ENCODE measurements at regions of chr13 and their contacts with region 1.

Region 1: DNA sequence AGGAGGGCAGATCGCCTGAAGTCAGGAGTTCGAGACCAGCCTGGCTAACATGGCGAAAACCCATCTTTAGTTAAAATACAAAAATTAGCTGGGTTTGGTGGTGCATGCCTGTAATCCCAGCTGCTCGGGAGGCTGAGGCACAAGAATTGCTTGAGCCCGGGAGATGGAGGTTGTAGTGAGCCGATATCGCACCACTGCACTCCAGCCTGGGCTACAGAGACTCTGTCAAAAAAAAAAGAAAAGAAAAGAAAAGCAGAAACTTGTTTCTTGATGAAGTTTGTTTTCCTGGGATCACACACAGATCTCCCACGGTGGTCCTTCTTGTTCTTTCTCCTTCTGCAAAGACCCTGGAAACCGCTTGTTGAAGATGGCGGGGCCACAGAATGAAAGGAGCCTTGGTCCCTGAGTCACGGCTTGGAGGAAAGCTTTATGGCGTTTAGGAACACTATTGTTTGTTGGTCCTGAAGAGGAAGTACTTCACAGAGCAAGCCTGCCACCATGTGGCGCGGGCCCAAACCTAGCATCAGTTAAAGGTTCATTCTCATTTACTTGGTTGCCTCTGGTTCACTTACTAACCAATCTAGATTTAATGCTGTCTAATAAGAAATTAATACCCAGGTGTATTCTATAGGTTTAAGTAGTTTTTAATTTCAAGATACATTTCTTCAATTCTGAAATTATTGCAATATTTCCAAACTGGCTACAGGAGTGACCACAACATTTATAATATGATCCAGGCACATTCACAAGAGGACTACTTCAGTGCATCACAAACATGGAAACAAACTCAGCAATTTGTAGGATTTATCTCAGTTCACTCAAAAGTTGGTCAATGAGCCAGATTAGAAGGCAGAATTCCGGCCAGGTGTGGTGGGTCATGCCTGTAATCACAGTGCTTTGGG is 21.3 kb upstream of the ARL11 start:
- DNase-seq: peak; percentile 91
- H3K4me3 ChIP-seq: peak overlapping the region; percentile 33
- H3K27ac ChIP-seq: no peak overlapping the region
- H3K4me1 ChIP-seq: no peaks in the 10 kb centered on the region
- H3K27me3 ChIP-seq: no peaks in the 10 kb centered on the region
- CTCF ChIP-seq: peak; percentile 86

Region 2: DNA sequence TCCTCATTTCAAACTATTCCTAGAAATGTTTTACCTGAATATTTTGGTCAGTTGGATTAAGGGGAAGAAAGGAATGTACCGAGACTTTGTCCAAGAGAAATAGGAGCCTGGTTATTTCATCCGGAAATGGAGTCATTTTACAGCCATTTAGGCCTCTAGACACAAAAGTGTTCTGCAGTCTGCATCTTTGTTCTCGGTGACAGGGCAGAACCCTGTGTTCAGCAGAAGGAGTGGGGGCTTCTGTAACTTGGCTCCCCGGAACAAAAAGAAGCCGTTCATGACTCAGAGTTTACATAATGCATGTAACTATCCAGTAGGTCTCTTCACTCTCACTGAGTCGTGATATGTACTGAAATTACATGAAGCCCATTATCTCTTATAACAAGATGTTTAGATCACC is 652.9 kb before region 1 on chr13:
- CTCF ChIA-PET with region 1: interaction called, 11 read pairs
- POLR2A ChIA-PET with region 1: no interaction called
- intact Hi-C with region 1: no loop called
- DNase-seq: no peak
- H3K4me3 ChIP-seq: no peak overlapping the region
- H3K27ac ChIP-seq: no peak overlapping the region
- H3K4me1 ChIP-seq: no peaks in the 10 kb centered on the region
- H3K27me3 ChIP-seq: no peaks in the 10 kb centered on the region
- CTCF ChIP-seq: no peak

Region 3: GRCh38 chr13:49238651-49239050 is 368.3 kb before region 1 on chr13:
- CTCF ChIA-PET with region 1: no interaction called
- POLR2A ChIA-PET with region 1: no interaction called
- intact Hi-C with region 1: loop called (anchors 5 kb)
- DNase-seq: no peak
- H3K4me3 ChIP-seq: no peak overlapping the region
- H3K27ac ChIP-seq: no peak overlapping the region
- H3K4me1 ChIP-seq: no peaks in the 10 kb centered on the region
- H3K27me3 ChIP-seq: peaks cover 3% of the 10 kb centered on the region
- CTCF ChIP-seq: no peak

Region 4: DNA sequence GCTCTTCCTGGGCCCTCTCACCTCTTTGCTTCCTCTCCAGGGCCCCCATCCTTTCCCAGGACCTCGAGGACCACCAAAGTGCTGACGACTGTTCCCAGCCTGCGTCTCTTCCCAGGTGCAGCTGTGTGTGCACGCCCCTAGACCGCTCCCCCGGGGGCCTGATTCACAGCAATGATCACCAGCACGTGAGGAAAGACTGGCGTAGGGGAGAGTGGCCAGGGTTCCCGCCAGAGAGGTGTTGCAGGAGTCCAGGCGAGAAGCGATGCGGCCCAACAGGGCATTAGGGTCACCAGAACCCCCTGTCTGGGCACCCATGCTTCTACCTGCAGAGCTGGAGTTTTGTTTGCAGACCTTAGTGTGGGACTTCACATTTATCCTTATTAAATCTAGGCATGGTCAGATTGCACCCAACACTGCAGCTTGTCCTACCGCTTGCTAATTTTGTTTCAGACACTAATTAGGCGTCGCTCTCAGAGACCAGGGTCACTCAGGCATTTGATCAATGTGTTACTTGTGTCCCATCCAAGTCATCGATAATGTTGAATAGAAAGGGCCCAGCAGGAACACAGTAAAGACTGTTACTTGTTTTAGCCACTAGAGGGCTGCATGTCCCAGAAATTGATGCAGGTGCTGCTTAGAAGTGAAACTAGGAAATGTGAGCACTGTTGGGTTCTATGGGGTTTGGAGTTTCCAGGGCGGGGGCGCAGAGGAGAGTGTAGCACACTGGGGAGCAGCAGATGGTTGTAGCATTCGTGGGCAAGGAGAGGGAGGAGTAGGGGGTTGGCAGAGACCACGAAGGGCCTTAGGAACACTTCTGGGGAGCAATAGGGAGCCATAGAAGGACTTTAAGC is 306.0 kb before region 1 on chr13:
- CTCF ChIA-PET with region 1: interaction called, 6 read pairs
- POLR2A ChIA-PET with region 1: no interaction called
- intact Hi-C with region 1: loop called (anchors 1 kb)
- DNase-seq: peak; percentile 77
- H3K4me3 ChIP-seq: no peak overlapping the region
- H3K27ac ChIP-seq: no peak overlapping the region
- H3K4me1 ChIP-seq: no peaks in the 10 kb centered on the region
- H3K27me3 ChIP-seq: no peaks in the 10 kb centered on the region
- CTCF ChIP-seq: peak; percentile 91

Region 5: GRCh38 chr13:49443704-49444523 is 163.1 kb before region 1 on chr13 and contains the starts of genes CAB39L and SETDB2:
- CTCF ChIA-PET with region 1: no interaction called
- POLR2A ChIA-PET with region 1: no interaction called
- intact Hi-C with region 1: loop called (anchors 10 kb)
- DNase-seq: peak; percentile 99
- H3K4me3 ChIP-seq: peak within 1 kb of the TSS; percentile 82
- H3K27ac ChIP-seq: peak within 1 kb of the TSS; percentile 75
- H3K4me1 ChIP-seq: peaks cover 5% of the 10 kb centered on the region
- H3K27me3 ChIP-seq: no peaks in the 10 kb centered on the region
- CTCF ChIP-seq: peak; percentile 51; the same call in 1 of the 2 replicates
- total RNA-seq, gene CAB39L: 3.6 and 4.0 TPM in 2 replicates
- total RNA-seq, gene SETDB2: 3.8 and 5.1 TPM in 2 replicates

Region 6: DNA sequence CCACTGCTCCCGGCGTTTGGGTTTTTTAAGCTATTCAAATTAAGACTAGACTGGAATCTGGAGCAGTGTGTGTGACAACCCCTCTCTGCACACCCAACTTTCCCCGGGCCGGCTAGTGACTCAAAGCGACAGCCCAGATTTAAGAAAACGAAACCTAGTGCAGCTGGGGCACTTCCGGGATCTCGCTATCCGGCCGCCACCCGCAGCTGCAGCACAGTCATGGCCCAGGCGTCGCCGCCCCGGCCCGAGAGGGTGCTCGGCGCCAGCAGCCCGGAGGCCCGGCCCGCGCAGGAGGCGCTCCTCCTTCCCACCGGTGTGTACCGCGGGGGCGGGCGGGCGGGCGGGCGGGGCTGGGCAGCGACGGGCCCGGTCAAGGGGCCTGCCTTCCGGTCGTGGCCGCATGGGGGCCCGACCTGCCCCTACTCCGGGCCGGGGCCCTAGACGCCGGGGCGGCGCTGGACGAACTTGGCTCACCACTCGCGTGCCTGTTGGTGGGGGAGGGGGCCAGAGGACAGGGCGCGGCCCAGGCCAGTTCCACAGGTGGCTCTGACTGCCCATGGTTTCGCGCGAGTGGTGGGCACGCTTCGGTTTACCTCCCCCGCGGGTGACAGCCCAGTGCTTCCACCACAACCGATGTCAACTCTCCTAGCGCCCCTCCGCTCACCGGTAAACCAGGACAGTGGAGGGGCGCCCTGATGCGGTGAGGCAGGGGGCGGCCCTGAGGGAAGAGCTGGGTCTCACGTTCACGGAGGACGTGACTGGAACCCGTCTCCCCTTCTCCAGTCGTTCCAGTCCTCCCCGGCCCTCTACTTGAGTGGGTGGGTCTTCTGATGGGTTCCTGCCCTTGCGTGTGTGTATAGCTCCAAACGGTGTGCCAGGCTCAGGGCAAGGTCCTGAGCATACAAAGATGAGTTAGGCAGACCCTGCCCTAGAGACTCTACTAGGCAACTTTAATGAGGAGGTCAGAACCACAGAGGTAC is 110.9 kb before region 1 on chr13 and contains the start of gene PHF11:
- CTCF ChIA-PET with region 1: no interaction called
- POLR2A ChIA-PET with region 1: no interaction called
- intact Hi-C with region 1: no loop called
- DNase-seq: peak; percentile 81
- H3K4me3 ChIP-seq: peak within 1 kb of the TSS; percentile 51
- H3K27ac ChIP-seq: peak within 1 kb of the TSS; percentile 72
- H3K4me1 ChIP-seq: no peaks in the 10 kb centered on the region
- H3K27me3 ChIP-seq: no peaks in the 10 kb centered on the region
- CTCF ChIP-seq: no peak
- total RNA-seq, gene PHF11: 16.0 and 17.0 TPM in 2 replicates

Region 7: GRCh38 chr13:49716615-49717014 is 109.6 kb after region 1 on chr13:
- CTCF ChIA-PET with region 1: no interaction called
- POLR2A ChIA-PET with region 1: no interaction called
- intact Hi-C with region 1: no loop called
- DNase-seq: no peak
- H3K4me3 ChIP-seq: no peak overlapping the region
- H3K27ac ChIP-seq: no peak overlapping the region
- H3K4me1 ChIP-seq: no peaks in the 10 kb centered on the region
- H3K27me3 ChIP-seq: no peaks in the 10 kb centered on the region
- CTCF ChIP-seq: no peak